Endothelial cell of umbilical vein (primary cell): ENCODE measurements at regions of chr5 and their contacts with region 1.

Region 1: GRCh38 chr5:149667084-149667828 is 62.9 kb upstream of the PPARGC1B start:
- DNase-seq: peak; percentile 42
- H3K4me3 ChIP-seq: no peak overlapping the region
- H3K27ac ChIP-seq: no peak overlapping the region
- H3K4me1 ChIP-seq: no peaks in the 10 kb centered on the region
- H3K27me3 ChIP-seq: peaks cover 3 to 4% of the 10 kb centered on the region in 2 experiments
- CTCF ChIP-seq: peak; percentile 78 to 89
- POLR2A ChIP-seq: no peak

Region 2: GRCh38 chr5:149656576-149657182 is 10.6 kb before region 1 on chr5:
- CTCF ChIA-PET with region 1: interaction called, 35 read pairs
- POLR2A ChIA-PET with region 1: no interaction called
- dilution Hi-C with region 1: no loop called
- intact Hi-C with region 1: no loop called
- DNase-seq: no peak
- H3K4me3 ChIP-seq: no peak overlapping the region
- H3K27ac ChIP-seq: no peak overlapping the region
- H3K4me1 ChIP-seq: no peaks in the 10 kb centered on the region
- H3K27me3 ChIP-seq: peaks cover 3 to 10% of the 10 kb centered on the region in 2 experiments
- CTCF ChIP-seq: peak; percentile 45 to 52
- POLR2A ChIP-seq: no peak

Region 3: GRCh38 chr5:149711338-149711737 is 44.1 kb after region 1 on chr5:
- CTCF ChIA-PET with region 1: interaction called, 12 read pairs
- POLR2A ChIA-PET with region 1: no interaction called
- dilution Hi-C with region 1: no loop called
- intact Hi-C with region 1: no loop called
- DNase-seq: no peak
- H3K4me3 ChIP-seq: no peak overlapping the region
- H3K27ac ChIP-seq: no peak overlapping the region
- H3K4me1 ChIP-seq: no peaks in the 10 kb centered on the region
- H3K27me3 ChIP-seq: peaks cover 33 to 46% of the 10 kb centered on the region in 2 experiments
- CTCF ChIP-seq: no peak
- POLR2A ChIP-seq: no peak

Region 4: GRCh38 chr5:149804478-149805450 is 137.5 kb after region 1 on chr5:
- CTCF ChIA-PET with region 1: interaction called, 10 read pairs
- POLR2A ChIA-PET with region 1: no interaction called
- dilution Hi-C with region 1: no loop called
- intact Hi-C with region 1: no loop called
- DNase-seq: no peak
- H3K4me3 ChIP-seq: no peak overlapping the region
- H3K27ac ChIP-seq: no peak overlapping the region
- H3K4me1 ChIP-seq: peaks cover 6% of the 10 kb centered on the region
- H3K27me3 ChIP-seq: no peaks in the 10 kb centered on the region
- CTCF ChIP-seq: no peak
- POLR2A ChIP-seq: no peak

Region 5: DNA sequence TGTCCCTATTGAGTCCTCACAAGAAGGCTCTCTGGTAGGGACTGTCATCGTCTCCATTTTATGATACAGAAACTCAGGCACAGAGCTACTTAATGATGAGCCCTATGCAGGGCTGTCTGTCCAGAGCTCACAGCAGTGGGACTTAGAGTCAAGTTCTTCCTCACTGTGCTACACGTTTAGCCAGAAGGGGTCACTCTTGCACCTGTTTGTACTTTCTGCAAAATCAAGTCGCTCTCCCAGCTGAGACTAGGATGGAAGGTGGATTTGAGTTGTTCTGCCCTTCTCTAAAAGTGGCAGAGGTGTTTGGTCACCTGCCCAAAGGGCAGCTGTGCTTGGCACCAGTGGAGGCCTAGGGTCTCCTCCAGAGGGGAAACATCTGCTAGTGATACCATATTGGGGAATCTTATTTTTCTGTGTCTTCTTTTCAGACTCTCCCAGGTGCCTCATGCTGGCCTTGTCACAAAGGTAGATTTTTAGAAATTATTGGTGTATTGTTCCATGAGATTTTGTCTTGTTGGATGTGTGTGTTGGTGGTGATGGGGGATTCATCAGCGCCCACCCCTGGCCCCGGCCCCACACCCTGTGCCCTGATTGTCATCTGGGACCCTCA is 167.1 kb after region 1 on chr5:
- CTCF ChIA-PET with region 1: interaction called, 240 read pairs
- POLR2A ChIA-PET with region 1: no interaction called
- dilution Hi-C with region 1: no loop called
- intact Hi-C with region 1: no loop called
- DNase-seq: peak; percentile 86
- H3K4me3 ChIP-seq: no peak overlapping the region
- H3K27ac ChIP-seq: no peak overlapping the region
- H3K4me1 ChIP-seq: peaks cover 1% of the 10 kb centered on the region
- H3K27me3 ChIP-seq: no peaks in the 10 kb centered on the region
- CTCF ChIP-seq: peak; percentile 79 to 80
- POLR2A ChIP-seq: no peak

Region 6: DNA sequence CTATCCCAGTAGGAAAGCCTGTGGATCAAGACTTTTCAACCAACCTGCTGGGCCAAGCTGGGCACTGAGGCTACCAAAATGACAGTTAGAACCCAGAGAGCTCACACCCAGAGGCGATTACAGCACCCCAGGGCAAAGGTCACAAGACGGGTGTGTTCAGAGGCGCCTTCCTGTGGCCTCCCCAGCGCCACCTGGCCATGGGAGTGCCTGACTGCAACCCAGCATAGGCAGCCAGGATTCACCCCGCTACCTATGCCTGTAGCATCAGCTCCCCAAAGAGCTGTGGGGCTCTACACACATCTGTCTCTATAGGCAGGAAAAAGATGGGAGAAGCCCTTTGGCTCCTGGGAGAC is 454.9 kb after region 1 on chr5:
- CTCF ChIA-PET with region 1: no interaction called
- POLR2A ChIA-PET with region 1: no interaction called
- dilution Hi-C with region 1: no loop called
- intact Hi-C with region 1: no loop called
- DNase-seq: no peak
- H3K4me3 ChIP-seq: no peak overlapping the region
- H3K27ac ChIP-seq: no peak overlapping the region
- H3K4me1 ChIP-seq: peaks cover 9% of the 10 kb centered on the region
- H3K27me3 ChIP-seq: no peaks in the 10 kb centered on the region
- CTCF ChIP-seq: peak in 1 of 2 donors; percentile 15
- POLR2A ChIP-seq: no peak